AG04449 (cell line): ENCODE measurements at regions of chr17 and their contacts with region 1.

Region 1: DNA sequence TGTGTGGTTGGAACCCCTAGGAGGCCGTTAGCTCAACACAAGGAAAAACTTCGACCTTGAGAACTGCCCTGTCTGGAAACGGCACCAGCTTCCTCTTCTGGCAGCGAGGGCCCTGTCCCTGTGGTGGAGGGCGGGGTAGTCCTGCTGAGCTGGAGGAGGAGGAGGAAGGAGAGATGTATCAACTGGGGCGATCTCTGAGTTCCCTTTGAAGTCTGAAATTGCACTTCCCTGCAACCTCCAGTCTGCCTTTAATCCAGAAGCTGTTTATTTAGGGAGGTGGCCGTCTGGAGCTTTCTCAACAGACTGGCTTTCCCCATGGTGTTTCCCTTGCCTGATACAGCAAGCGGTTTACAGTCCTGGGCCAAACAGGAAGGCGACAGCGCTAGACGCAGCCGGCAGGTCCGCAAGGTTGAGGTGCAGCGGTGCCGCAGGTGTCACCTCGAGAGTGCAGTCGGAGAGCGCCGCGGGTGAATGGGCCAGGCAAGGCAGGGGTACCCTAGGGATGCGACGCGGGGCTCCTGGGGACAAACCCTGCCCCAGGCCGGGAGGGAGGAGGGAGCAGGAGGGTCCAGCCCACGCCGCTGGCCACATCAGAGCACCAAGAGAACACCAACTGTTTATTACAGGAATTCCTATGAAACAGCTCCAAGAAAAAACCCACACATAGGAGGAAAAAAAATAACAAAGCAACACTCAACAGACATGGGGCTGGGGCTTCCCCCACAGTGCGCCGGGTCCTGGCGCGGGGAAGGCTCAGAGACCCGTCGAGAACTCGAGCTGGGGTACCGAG is 11.4 kb upstream of the MRPS23 start:
- DNase-seq: no peak
- H3K4me3 ChIP-seq: peak overlapping the region; percentile 12
- CTCF ChIP-seq: no peak

Region 2: DNA sequence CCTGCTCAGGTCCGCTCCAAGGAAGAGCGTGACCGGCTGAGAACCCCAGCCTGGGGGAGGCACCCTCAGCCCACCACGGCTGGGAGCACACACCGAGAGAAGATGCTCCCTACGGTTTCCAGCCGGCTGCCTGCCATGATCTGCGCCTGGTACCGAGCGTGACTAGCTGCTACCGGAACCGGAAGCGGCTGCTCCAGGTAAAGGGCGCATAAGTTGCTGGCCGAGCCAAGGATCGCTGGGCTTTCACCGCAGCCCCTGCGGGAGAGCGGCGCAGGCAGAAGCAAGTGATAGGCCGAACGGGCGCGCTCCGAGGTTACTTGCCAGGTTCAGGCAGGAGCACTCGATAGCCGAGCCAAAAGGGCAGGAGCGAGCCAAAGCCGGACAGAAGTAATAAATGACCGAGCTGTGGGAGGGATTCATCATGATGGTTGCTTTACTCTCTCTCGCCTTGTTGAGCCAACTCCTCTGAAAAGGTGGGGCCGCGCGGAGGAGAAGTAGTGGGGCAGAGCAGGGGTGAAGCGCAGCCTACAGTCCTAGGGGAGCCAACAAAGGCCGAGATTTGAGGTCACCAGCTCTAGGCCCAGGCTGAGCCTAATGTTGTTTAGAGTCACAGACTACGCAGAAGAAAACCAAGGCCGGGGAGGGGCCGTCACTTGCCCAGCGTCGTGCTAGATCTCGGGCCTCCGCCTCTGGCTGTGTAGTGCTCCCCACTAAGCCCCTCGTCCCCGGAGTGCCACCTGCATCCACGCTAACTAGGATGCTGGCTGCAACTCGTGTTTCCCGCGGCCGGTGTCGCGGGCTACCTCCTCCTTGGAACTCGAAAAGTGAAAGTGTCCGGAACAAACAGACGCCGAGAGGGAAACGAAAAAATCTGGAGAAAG is 11.1 kb before region 1 on chr17 and contains the start of gene MRPS23:
- CTCF ChIA-PET with region 1: interaction called, 104 read pairs
- POLR2A ChIA-PET with region 1: interaction called, 7 read pairs
- DNase-seq: peak; percentile 95
- H3K4me3 ChIP-seq: peak within 1 kb of the TSS; percentile 99
- CTCF ChIP-seq: no peak

Region 3: GRCh38 chr17:57946798-57947358 is 85.7 kb after region 1 on chr17:
- CTCF ChIA-PET with region 1: interaction called, 56 read pairs
- POLR2A ChIA-PET with region 1: interaction called, 4 read pairs
- DNase-seq: no peak
- H3K4me3 ChIP-seq: peak overlapping the region; percentile 51
- CTCF ChIP-seq: no peak

Region 4: GRCh38 chr17:57982452-57983170 is 121.4 kb after region 1 on chr17:
- CTCF ChIA-PET with region 1: interaction called, 31 read pairs
- POLR2A ChIA-PET with region 1: interaction called, 4 read pairs
- DNase-seq: no peak
- H3K4me3 ChIP-seq: no peak overlapping the region
- CTCF ChIP-seq: no peak

Region 5: GRCh38 chr17:58112970-58113631 is 251.9 kb after region 1 on chr17:
- CTCF ChIA-PET with region 1: interaction called, 33 read pairs
- POLR2A ChIA-PET with region 1: no interaction called
- DNase-seq: no peak
- H3K4me3 ChIP-seq: no peak overlapping the region
- CTCF ChIP-seq: peak; percentile 89